ENCODE measurements at regions of chr13 and their contacts with region 1.

Region 1: DNA sequence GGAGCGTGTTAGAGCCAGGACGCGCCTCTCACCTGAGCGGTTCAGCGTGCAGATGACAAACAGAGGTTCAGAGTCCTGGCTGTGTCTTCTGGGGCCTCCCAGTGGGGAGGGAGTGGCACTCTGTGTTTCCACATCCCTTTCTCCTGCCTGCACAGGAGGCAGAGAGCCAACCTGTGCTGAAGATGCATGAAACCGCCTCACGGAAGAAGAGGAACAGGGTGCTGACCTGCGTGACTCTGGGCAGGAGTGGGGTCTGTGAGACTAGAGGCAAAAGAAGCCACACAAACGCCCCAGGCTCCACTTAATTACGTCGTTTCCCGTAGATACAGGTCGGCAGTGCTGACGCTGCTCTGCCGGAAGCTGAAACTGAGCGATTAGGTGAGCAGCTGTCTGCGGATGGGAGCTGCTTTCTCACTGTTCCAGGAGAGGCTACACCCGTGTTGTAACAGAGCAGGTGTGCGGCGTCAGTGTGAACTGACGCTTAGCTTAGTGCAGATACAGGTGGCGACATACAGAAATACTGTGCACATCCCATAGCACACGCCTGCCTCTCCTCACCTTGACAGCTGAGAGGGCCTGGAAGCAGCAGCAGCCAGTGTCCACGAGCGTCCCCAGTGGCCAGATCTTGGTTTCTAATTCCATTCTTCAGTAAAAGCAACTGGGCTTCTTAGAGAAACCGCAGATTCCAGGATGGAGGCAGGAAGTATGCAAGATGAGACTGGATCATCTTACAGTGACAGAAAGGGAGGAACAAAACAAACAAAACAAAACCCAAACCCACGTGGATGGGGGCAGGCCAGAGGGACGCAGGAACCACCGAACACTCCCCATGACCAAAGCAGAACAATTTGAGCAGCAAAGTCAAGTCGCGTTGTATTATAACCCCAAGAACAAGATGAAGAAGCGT is 37.7 kb upstream of the MCF2L start:
- DNase-seq: peak; percentile 59
- ATAC-seq: peak; percentile 85
- H3K4me3 ChIP-seq: peak overlapping the region; percentile 49 to 73 (median 53); a peak in 5 of 6 replicates
- H3K27ac ChIP-seq: peak overlapping the region; percentile 59
- H3K4me1 ChIP-seq: peaks cover 59% of the 10 kb centered on the region
- H3K27me3 ChIP-seq: no peaks in the 10 kb centered on the region
- CTCF ChIP-seq: peak; percentile 72
- EP300 ChIP-seq: no peak
- POLR2A ChIP-seq: no peak
- RAD21 ChIP-seq: peak; percentile 53; the same call in 1 of the 2 replicates

Region 2: DNA sequence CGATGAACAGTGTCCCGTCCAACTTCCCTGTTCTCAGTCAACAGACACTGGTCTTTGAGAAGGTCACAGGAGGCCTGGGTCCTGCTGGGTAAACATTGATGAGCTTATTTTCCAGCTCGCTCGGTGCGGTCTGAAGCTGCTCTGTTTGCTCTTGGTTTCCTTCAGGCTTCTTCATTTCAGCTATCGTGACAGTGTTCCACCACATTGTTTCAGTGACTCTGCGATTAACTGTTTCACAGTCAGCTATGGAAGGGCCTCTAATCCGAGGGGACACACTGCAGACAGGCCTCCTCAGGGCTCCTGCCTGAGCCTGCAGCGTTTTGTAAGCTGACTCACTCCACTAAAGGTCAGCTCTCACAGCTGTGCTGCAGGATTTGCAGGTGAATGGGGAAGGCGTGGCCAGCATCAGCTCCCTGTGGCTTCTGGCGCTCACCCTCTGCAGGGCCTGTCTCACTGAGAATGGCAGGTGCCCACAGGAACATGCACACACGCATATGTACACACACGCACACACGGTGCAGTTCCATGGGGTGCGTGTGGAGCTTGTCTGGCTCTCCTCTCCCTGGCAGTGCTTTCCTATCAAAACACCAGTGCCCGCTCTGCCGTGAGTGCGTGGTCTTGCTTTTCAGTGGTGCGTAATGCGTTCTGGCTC is 25.2 kb before region 1 on chr13:
- CTCF ChIA-PET with region 1: no interaction called
- POLR2A ChIA-PET with region 1: interaction called, 8 read pairs
- in situ Hi-C with region 1: no loop called
- intact Hi-C with region 1: loop called (anchors 2 kb)
- DNase-seq: peak; percentile 66
- ATAC-seq: peak; percentile 90
- H3K4me3 ChIP-seq: peak overlapping the region in 2 of 3 experiments; percentile 5 to 50; a peak in 2 of 6 replicates
- H3K27ac ChIP-seq: peak overlapping the region; percentile 73
- H3K4me1 ChIP-seq: peaks cover 59% of the 10 kb centered on the region
- H3K27me3 ChIP-seq: no peaks in the 10 kb centered on the region
- CTCF ChIP-seq: no peak; the same call in 1 of the 2 replicates
- EP300 ChIP-seq: no peak
- POLR2A ChIP-seq: peak in 1 of 2 experiments; percentile 37; a peak in 1 of 4 replicates
- RAD21 ChIP-seq: no peak

Region 3: DNA sequence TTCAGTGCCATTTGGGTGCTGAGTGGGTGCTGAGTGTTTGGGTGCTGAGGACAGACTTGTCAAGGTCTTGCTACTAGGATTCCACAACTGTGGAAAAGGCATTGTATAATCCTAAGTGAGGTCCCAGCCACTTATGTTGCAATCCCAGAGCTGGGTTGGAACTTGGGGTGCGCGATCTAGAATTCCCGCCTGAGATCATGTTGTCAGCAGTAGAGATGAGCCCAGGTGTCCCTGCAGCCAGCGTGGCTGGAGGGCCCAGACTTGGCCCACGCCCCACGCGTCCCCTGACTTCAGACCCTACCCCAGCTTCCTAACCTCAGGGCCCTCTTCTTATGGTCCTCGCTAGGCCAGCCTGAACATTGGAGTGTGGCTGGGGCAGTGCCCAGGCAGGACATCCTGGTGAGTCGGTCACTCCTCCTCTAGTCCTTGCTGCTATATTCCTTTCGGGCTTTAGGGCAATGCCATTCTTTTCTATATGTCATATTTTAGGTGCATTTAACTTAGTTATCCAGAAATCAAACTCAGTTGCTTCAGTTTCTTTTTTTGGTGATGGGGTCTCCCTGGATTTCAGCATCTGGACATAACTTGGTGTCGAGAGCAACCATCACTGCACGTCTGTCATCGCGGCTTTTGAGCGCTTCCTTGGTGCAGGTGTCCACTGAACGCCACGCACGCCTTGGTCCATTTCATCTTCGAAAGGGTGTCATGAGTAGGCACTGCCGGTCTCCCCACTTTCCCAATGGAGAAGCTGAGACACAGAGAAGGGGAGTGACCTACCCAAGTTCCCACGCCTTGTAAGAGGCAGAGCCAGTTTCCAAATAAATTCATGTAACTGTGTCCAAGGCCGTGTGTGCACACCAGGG is 127.9 kb after region 1 on chr13:
- CTCF ChIA-PET with region 1: no interaction called
- POLR2A ChIA-PET with region 1: no interaction called
- in situ Hi-C with region 1: no loop called
- intact Hi-C with region 1: no loop called
- DNase-seq: no peak
- ATAC-seq: peak; percentile 36
- H3K4me3 ChIP-seq: no peak overlapping the region
- H3K27ac ChIP-seq: no peak overlapping the region
- H3K4me1 ChIP-seq: no peaks in the 10 kb centered on the region
- H3K27me3 ChIP-seq: no peaks in the 10 kb centered on the region
- CTCF ChIP-seq: no peak
- EP300 ChIP-seq: no peak
- POLR2A ChIP-seq: no peak
- RAD21 ChIP-seq: no peak

Measured in HepG2 (cell line).